ENCODE measurements at regions of chr9 and their contacts with region 1.

Region 1: GRCh38 chr9:7536310-7536939 is 263.2 kb downstream of the DMAC1 start:
- DNase-seq: peak; percentile 15
- H3K4me3 ChIP-seq: no peak overlapping the region
- H3K27ac ChIP-seq: no peak overlapping the region
- H3K27me3 ChIP-seq: peaks cover under 1% of the 10 kb centered on the region
- CTCF ChIP-seq: peak; percentile 79

Region 2: DNA sequence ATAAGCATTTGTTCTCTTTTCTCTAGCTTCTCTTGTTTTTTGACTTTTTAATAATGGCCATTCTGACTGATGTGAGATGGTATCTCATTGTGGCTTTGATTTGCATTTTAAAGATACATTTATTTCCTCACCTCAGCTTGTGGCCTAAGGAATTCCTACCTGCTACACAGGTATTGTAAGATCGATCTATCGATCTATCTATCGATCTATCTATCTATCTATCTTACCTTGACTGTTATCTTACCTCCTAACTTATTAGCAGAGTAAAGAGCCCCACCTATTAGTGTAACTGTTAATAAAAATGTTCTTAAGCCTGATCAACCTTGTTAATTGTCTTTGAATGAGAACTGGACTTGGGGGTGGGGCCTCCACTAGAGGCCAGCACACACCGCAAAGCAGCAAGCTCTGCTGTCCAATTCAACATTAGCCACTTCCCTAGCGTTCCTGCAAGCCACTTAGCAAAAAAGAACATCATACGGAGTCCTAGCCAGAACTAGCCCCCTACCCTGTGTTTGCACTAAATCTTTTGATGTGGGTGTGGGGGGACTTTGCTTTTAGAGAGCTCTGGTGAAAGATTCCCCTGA is 262.9 kb before region 1 on chr9:
- CTCF ChIA-PET with region 1: interaction called, 12 read pairs
- POLR2A ChIA-PET with region 1: no interaction called
- DNase-seq: peak; percentile 6
- H3K4me3 ChIP-seq: no peak overlapping the region
- H3K27ac ChIP-seq: no peak overlapping the region
- H3K27me3 ChIP-seq: peaks cover 2% of the 10 kb centered on the region
- CTCF ChIP-seq: peak; percentile 79

Region 3: GRCh38 chr9:7592321-7593316 is 56.2 kb after region 1 on chr9:
- CTCF ChIA-PET with region 1: no interaction called
- POLR2A ChIA-PET with region 1: no interaction called
- DNase-seq: no peak
- H3K4me3 ChIP-seq: no peak overlapping the region
- H3K27ac ChIP-seq: no peak overlapping the region
- H3K27me3 ChIP-seq: no peaks in the 10 kb centered on the region
- CTCF ChIP-seq: no peak

Region 4: GRCh38 chr9:8533681-8534080 is 997.3 kb after region 1 on chr9:
- CTCF ChIA-PET with region 1: interaction called, 16 read pairs
- POLR2A ChIA-PET with region 1: no interaction called
- DNase-seq: no peak
- H3K4me3 ChIP-seq: no peak overlapping the region
- H3K27ac ChIP-seq: no peak overlapping the region
- H3K27me3 ChIP-seq: no peaks in the 10 kb centered on the region
- CTCF ChIP-seq: no peak

Measured in AG04450 (cell line).